ENCODE measurements at regions of chr17 and their contacts with region 1.

Region 1: DNA sequence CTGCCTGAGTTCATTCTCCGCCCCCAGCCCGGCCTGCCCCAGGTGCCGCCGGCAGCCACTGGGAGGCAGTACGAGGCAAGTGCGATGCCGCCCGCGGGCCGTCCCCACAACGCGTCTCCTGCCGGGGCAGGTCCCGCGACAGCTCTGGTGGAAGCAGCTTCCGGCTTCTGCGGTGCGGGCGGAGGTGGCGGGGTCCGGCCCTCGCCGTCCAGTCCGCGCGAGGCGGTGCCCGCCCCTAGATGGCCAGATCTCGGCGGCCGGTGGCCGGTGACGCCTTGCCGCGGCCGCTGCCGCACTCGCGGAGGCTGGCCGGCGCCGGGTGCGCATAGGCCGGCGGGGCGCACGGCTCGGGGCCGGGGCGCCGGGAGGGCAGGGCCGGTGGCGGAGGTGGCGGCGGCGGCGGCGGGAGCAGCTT is 1.8 kb downstream of the GJD3 start:
- DNase-seq: peak; percentile 91
- H3K4me3 Mint-ChIP-seq: peak overlapping the region; percentile 77
- H3K27ac Mint-ChIP-seq: no peak overlapping the region
- H3K4me1 Mint-ChIP-seq: peaks cover 41% of the 10 kb centered on the region
- H3K27me3 Mint-ChIP-seq: peaks cover 12% of the 10 kb centered on the region

Region 2: GRCh38 chr17:40303009-40303657 is 59.6 kb before region 1 on chr17:
- CTCF ChIA-PET with region 1: interaction called, 82 read pairs
- POLR2A ChIA-PET with region 1: no interaction called
- DNase-seq: peak; percentile 65
- H3K4me3 Mint-ChIP-seq: no peak overlapping the region
- H3K27ac Mint-ChIP-seq: no peak overlapping the region
- H3K4me1 Mint-ChIP-seq: peaks cover 22% of the 10 kb centered on the region
- H3K27me3 Mint-ChIP-seq: no peaks in the 10 kb centered on the region

Region 3: DNA sequence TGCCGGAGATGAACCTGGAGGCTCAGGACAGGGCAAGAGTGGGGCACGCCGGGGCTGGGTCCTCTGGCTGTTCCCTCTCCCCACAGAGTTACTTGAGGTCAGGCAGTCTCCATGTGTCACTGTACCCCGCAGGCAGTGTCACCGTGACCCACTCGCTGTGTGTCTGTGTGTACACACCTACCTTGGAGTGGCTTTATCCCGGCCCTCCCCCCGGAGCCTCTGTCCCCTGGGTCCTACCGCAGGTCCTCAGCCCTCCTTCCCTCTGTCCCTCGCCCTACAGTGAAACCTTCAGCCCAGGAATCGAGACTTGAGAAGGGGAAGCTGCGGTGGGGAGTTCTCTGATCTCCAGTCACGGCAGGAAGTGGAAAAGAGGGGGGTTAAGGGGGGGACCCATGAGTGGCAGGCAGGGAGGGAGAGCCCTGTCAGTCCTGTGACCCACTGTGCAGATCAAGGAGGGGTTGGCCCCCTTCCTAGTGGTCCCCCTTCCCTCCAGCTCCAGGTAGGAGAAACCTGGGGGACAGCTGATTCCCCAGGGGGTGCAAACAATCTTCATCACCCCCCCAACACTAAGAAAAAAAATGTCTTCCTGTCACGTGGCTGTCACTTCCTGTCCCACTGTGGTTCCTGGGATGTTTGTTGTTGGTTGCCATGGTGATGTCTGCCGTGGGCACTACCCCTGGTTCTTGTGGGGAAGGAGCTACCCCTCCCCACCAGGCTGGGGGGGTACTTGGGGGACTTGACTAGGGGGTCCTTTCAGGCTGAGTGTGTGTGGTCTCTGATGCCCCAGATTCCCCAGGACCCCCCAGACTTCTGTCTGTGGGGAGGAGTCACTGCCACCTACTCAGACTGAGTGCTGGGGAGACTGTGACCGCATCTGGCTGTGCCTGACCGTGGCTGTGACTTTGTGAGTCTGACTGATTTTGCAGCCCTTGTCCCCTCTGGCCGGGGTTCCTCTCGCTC is 40.1 kb before region 1 on chr17:
- CTCF ChIA-PET with region 1: no interaction called
- POLR2A ChIA-PET with region 1: no interaction called
- DNase-seq: peak; percentile 96
- H3K4me3 Mint-ChIP-seq: peak overlapping the region; percentile 99
- H3K27ac Mint-ChIP-seq: peak overlapping the region; percentile 96
- H3K4me1 Mint-ChIP-seq: peaks cover 68% of the 10 kb centered on the region
- H3K27me3 Mint-ChIP-seq: no peaks in the 10 kb centered on the region

Region 4: GRCh38 chr17:40374821-40375498 is 12.3 kb after region 1 on chr17:
- CTCF ChIA-PET with region 1: interaction called, 12 read pairs
- POLR2A ChIA-PET with region 1: no interaction called
- DNase-seq: no peak
- H3K4me3 Mint-ChIP-seq: no peak overlapping the region
- H3K27ac Mint-ChIP-seq: no peak overlapping the region
- H3K4me1 Mint-ChIP-seq: peaks cover 22% of the 10 kb centered on the region
- H3K27me3 Mint-ChIP-seq: peaks cover 3% of the 10 kb centered on the region

Region 5: GRCh38 chr17:40410082-40410481 is 47.4 kb after region 1 on chr17:
- CTCF ChIA-PET with region 1: no interaction called
- POLR2A ChIA-PET with region 1: no interaction called
- DNase-seq: no peak
- H3K4me3 Mint-ChIP-seq: no peak overlapping the region
- H3K27ac Mint-ChIP-seq: peak overlapping the region; percentile 2
- H3K4me1 Mint-ChIP-seq: peaks cover 42% of the 10 kb centered on the region
- H3K27me3 Mint-ChIP-seq: no peaks in the 10 kb centered on the region

Region 6: DNA sequence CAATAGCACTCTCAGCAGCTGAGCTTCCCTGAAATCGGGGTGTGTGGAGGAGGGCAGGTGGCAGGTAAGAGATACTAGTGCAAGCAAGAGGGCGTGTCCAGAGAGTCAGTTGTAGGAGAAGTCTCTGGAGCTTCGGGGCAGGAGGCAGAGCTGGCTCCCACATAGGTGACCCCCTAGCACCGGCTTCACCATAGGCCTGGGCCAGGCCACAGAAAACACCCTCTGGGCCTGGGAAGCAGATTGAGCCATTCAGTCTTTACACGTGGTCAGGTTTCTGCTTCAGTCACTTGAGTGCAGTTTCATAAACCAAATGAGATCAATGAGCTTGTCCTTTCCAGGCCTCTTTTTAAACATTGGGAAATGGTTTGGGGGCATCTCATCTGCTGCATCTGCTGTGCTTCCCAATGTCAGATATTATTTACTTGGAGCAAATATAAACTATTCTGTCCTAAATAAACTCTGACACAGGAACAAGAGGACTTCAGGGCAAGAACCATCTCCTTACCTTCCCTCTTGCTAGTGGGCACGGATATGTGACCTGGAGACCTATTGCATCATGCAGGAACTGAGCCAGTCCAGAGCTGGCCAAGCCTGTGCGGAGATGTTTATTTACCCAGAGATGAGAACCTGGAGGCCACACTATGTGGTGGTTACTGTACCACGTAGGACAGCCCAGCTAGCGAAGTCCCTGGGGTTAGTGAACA is 186.4 kb after region 1 on chr17:
- CTCF ChIA-PET with region 1: interaction called, 11 read pairs
- POLR2A ChIA-PET with region 1: interaction called, 7 read pairs
- DNase-seq: peak; percentile 18
- H3K4me3 Mint-ChIP-seq: no peak overlapping the region
- H3K27ac Mint-ChIP-seq: peak overlapping the region; percentile 88
- H3K4me1 Mint-ChIP-seq: peaks cover 91% of the 10 kb centered on the region
- H3K27me3 Mint-ChIP-seq: no peaks in the 10 kb centered on the region